ENCODE measurements at regions of chr15 and their contacts with region 1.

Region 1: DNA sequence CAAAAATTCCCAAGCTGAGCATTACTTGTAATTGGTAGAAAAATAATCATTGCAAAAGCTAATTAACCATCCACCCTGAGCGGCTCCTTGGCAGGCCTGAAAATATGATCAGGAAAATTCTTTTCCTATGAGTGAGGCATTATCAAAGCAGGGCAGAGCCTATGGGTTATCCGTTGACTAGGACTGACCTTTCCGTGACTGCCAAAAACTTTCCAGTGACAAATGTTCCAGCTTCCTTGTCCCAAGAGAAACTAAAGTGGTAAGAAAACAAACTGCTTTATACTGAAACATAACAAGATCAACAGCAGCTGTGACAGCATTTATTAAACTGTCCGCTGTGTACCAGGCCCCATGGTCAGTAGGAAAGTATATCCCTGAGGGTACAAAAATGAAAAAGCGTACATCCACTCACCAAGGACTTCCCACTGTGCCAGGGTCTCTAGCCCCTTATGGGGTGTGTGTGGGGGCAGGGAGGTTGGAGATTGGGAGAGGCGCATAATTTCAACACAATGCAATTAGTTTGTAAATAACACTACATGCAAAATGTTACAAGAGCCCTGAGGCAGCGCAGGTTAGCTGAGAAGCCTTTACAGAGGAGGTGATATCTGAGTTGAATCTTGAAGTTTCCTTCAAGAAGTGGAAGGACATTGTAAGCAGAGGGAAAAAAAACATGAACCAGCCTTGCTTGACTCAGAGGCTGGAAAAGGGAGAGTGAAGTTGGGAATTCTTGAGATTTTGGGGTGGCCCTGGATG is 8.5 kb downstream of the LIPC start:
- DNase-seq: peak; percentile 46
- H3K4me3 Mint-ChIP-seq: no peak overlapping the region
- H3K27ac Mint-ChIP-seq: peak overlapping the region; percentile 8
- H3K4me1 Mint-ChIP-seq: peaks cover 24% of the 10 kb centered on the region
- H3K27me3 Mint-ChIP-seq: no peaks in the 10 kb centered on the region
- CTCF ChIP-seq: no peak

Region 2: DNA sequence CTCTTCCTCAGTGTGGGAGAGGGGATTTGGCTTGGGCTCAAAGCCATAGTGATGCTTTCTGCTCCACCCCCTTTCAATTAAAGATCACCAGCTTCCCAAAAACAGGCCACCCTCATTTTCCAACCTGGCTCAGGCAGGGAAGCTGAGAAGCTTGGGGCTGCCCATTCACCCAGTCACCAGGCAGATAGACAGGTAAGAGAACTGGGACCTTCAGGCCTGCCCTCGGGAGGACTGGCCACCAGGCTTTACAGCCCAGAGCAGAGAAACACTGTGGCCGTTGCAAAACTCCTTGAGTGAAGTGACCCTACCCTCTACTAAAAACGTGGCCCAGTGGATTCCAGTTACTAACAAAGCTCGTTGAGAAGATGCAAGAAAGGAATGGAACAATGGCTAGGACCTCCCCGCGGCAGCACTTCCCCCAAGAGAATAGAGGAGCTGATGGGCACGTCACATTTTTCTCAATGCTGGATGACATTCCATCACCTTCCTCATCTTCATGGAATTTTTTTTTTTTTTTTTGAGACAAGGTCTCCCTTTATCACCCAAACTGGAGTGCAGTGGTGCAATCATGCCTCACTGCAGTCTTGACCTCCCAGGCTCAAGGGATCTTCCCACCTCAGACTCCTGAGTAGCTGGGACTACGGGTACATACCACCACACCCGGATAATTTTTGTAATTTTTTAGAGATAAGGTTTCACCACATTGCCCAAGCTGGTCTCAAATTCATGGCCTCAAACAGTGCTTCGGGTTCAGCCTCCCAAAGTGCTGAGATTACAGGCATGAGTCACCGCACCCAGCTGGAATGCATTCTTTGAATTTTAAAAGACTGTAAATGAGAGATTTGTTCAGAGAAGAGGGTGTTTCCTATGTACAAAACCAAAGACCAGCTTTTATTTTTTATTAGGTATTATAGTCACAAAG is 29.4 kb after region 1 on chr15:
- CTCF ChIA-PET with region 1: interaction called, 3 read pairs
- POLR2A ChIA-PET with region 1: interaction called, 12 read pairs
- intact Hi-C with region 1: no loop called
- DNase-seq: peak; percentile 87
- H3K4me3 Mint-ChIP-seq: no peak overlapping the region
- H3K27ac Mint-ChIP-seq: peak overlapping the region; percentile 49
- H3K4me1 Mint-ChIP-seq: peaks cover 24% of the 10 kb centered on the region
- H3K27me3 Mint-ChIP-seq: no peaks in the 10 kb centered on the region
- CTCF ChIP-seq: no peak

Region 3: GRCh38 chr15:58677426-58677825 is 237.1 kb after region 1 on chr15:
- CTCF ChIA-PET with region 1: no interaction called
- POLR2A ChIA-PET with region 1: no interaction called
- intact Hi-C with region 1: no loop called
- DNase-seq: no peak
- H3K4me3 Mint-ChIP-seq: no peak overlapping the region
- H3K27ac Mint-ChIP-seq: no peak overlapping the region
- H3K4me1 Mint-ChIP-seq: peaks cover 7% of the 10 kb centered on the region
- H3K27me3 Mint-ChIP-seq: no peaks in the 10 kb centered on the region
- CTCF ChIP-seq: no peak

Measured in MCF 10A (cell line).